Activated CD8-positive, alpha-beta T cell treated with anti-CD3 and anti-CD28 coated beads for 36 hours (primary cell): ENCODE measurements at regions of chr10 and their contacts with region 1.

Region 1: GRCh38 chr10:9097206-9097985 is 1042.9 kb downstream of the GATA3 start:
- DNase-seq: no peak
- ATAC-seq: no peak
- H3K4me3 Mint-ChIP-seq: no peak overlapping the region
- H3K27ac Mint-ChIP-seq: peak overlapping the region; percentile 55
- H3K4me1 Mint-ChIP-seq: peaks cover 41% of the 10 kb centered on the region
- H3K27me3 Mint-ChIP-seq: no peaks in the 10 kb centered on the region
- CTCF ChIP-seq: no peak

Region 2: DNA sequence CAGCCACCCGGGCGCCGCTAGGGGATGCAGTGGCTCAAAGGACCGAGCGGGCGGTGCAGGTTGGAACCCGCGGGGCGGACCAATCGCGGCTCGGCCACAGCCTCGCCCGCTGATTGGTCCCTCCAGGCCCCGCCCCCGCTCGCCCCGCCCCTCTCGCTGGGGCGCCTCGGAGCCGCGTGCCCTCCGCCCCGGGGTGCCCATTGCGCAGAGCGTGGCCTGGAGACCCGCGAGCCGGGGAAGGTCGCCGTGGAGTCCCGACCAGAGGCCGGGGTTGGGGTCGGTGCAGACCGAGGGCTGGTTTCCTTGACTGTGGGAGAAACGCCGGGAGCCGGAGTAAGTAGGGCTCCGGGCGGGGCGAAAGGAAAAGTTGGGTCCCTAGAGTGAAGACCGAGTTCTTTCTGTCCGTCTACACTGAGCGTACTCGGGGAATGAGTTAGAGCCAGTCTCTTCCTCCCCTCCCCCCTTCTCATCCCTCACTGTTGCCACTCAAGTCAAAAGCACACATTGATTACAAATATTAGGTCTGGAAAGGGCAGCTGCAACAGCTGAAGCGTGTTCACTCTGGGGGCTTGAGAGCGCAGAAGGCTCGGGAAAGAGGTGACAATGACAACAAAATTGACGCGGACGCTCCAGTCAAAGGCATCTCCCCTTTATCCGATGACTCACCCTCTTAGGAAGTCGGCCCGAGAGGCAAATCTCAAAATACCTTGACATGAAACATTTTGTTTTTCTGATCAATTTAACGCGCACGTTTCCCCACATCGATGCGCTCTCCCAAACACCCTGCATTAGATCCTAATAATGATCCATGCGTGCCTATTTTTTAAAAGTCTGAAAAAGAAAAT is 1043.7 kb before region 1 on chr10:
- CTCF ChIA-PET with region 1: no interaction called
- POLR2A ChIA-PET with region 1: no interaction called
- intact Hi-C with region 1: loop called (anchors 10 kb)
- DNase-seq: peak; percentile 96
- ATAC-seq: peak; percentile 68
- H3K4me3 Mint-ChIP-seq: peak overlapping the region; percentile 89
- H3K27ac Mint-ChIP-seq: peak overlapping the region; percentile 96
- H3K4me1 Mint-ChIP-seq: peaks cover 31% of the 10 kb centered on the region
- H3K27me3 Mint-ChIP-seq: peaks cover 16% of the 10 kb centered on the region
- CTCF ChIP-seq: no peak

Region 3: GRCh38 chr10:9209105-9209798 is 111.9 kb after region 1 on chr10:
- CTCF ChIA-PET with region 1: interaction called, 4 read pairs
- POLR2A ChIA-PET with region 1: no interaction called
- intact Hi-C with region 1: loop called (anchors 10 kb)
- DNase-seq: peak; percentile 86
- ATAC-seq: peak; percentile 87
- H3K4me3 Mint-ChIP-seq: no peak overlapping the region
- H3K27ac Mint-ChIP-seq: peak overlapping the region; percentile 52
- H3K4me1 Mint-ChIP-seq: peaks cover 10% of the 10 kb centered on the region
- H3K27me3 Mint-ChIP-seq: peaks cover 12% of the 10 kb centered on the region
- CTCF ChIP-seq: peak; percentile 94

Region 4: DNA sequence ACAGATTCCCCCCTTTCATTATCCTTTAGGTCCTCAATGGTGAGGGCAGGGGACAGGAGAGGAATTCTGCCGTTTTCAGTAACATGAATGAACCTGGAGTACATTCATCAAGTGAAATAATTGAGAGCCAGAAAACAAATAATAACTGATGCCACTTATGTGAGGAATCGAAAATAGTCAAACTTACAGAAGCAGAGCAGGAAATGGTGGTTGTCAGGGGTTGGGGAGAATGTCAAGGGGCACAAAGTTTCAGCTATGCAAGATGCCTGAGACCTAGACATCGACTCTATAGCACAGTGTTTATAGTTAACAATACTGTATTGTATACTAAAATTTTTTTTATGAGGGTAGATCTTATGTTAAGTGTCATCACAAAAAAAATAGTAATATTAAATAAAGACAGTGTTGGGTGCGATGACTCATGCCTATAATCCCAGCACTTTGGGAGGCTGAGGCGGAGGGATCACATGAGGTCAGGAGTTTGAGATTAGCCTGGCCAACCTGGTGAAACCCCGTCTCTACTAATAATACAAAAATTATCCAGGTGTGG is 176.9 kb after region 1 on chr10:
- CTCF ChIA-PET with region 1: no interaction called
- POLR2A ChIA-PET with region 1: no interaction called
- intact Hi-C with region 1: no loop called
- DNase-seq: no peak
- ATAC-seq: no peak
- H3K4me3 Mint-ChIP-seq: no peak overlapping the region
- H3K27ac Mint-ChIP-seq: no peak overlapping the region
- H3K4me1 Mint-ChIP-seq: no peaks in the 10 kb centered on the region
- H3K27me3 Mint-ChIP-seq: peaks cover 7% of the 10 kb centered on the region
- CTCF ChIP-seq: no peak